ENCODE measurements at regions of chr19 and their contacts with region 1.

Region 1: DNA sequence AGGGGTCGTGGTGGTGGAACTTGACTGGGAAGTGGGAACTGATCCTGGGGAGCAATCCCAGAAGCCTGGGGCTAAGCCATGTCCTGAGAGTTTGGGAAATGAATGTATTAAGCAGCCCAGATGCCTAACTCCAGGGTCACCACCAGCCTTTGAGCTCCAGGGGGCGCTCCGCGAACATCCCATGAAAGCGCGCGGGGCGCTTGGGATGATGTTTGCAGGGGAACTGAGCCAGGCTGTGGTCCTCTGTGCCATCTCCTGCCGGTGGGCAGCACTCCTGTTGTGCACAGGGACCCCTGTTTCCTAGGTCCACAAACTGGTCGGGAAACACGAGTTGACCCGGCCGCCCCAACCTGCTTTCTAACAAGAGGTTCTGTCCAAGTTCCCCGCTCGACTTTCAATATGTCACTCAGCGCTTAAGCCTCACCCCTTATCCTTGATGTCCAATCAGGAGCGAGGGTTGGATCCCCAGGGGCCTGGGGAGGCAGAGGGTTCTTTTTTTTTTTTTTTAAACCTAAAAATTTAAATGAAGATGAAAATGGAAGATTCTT is 14.4 kb downstream of the LEUTX start:
- DNase-seq: peak; percentile 100
- ATAC-seq: peak; percentile 98
- H3K4me3 ChIP-seq: peak overlapping the region; percentile 29 to 42
- H3K27ac ChIP-seq: no peak overlapping the region
- H3K4me1 ChIP-seq: peaks cover 13% of the 10 kb centered on the region
- H3K27me3 ChIP-seq: peaks cover 29% of the 10 kb centered on the region
- CTCF ChIP-seq: no peak

Region 2: GRCh38 chr19:38634757-38635482 is 1158.2 kb before region 1 on chr19:
- CTCF ChIA-PET with region 1: interaction called, 17 read pairs
- POLR2A ChIA-PET with region 1: no interaction called
- in situ Hi-C with region 1: no loop called
- intact Hi-C with region 1: no loop called
- DNase-seq: no peak
- ATAC-seq: peak; percentile 73
- H3K4me3 ChIP-seq: no peak overlapping the region
- H3K27ac ChIP-seq: no peak overlapping the region
- H3K4me1 ChIP-seq: peaks cover 4% of the 10 kb centered on the region; the same call in 1 of the 2 replicates
- H3K27me3 ChIP-seq: no peaks in the 10 kb centered on the region
- CTCF ChIP-seq: no peak

Region 3: DNA sequence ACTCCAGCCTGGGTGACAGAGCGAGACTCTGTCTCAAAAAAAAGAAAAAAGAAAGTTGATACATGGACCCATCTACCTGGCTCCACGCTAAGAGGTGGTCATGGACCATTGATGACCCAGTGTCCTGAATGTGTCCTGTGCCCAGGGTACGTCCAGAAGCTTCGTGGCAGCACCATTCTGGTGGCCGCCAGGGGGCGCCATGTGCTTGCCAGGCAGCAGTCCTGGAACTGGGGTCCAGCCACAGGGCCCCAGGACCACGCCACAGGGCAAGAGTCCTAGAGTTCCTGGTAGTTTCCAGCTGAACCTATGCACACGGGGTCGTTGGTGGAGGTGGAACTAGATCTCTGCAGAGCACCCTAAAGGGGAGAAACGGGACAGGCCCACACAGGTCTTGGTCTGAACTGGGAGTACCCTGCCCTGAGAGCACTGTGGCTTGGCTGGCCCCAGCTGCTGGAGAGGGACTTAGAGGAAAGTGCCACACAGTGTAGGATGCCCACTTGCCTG is 740.8 kb before region 1 on chr19:
- CTCF ChIA-PET with region 1: interaction called, 34 read pairs
- POLR2A ChIA-PET with region 1: interaction called, 4 read pairs
- in situ Hi-C with region 1: no loop called
- intact Hi-C with region 1: loop called (anchors 5 kb)
- DNase-seq: peak; percentile 90
- ATAC-seq: peak; percentile 91
- H3K4me3 ChIP-seq: no peak overlapping the region
- H3K27ac ChIP-seq: peak overlapping the region; percentile 4; the same call in 1 of the 2 replicates
- H3K4me1 ChIP-seq: no peaks in the 10 kb centered on the region
- H3K27me3 ChIP-seq: no peaks in the 10 kb centered on the region
- CTCF ChIP-seq: no peak

Region 4: DNA sequence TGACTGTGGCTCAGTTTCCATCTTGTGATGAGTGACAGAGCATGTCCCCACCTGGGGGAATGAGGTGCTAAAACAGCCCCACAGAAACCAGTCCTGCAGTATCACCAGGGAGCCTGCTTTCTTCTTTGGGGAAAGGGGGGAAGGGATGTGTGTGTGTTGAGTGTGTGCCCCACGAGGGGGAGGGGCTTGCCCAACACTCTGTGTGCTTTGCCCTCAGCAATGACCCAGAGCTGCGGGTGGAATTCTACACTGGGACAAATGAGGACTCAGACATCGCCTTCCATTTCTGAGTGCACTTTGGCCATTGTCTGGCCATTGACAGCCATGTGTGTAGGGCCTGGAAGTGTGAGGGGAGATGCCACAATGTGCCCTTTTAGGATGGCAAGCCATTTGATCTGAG is 98.8 kb before region 1 on chr19:
- CTCF ChIA-PET with region 1: interaction called, 5 read pairs
- POLR2A ChIA-PET with region 1: interaction called, 12 read pairs
- in situ Hi-C with region 1: no loop called
- intact Hi-C with region 1: no loop called
- DNase-seq: no peak
- ATAC-seq: peak; percentile 14; the same call in 1 of the 2 replicates
- H3K4me3 ChIP-seq: no peak overlapping the region
- H3K27ac ChIP-seq: no peak overlapping the region
- H3K4me1 ChIP-seq: no peaks in the 10 kb centered on the region
- H3K27me3 ChIP-seq: peaks cover 96% of the 10 kb centered on the region
- CTCF ChIP-seq: no peak

Region 5: GRCh38 chr19:39818626-39819097 is 25.6 kb after region 1 on chr19:
- CTCF ChIA-PET with region 1: interaction called, 24 read pairs
- POLR2A ChIA-PET with region 1: interaction called, 12 read pairs
- in situ Hi-C with region 1: no loop called
- intact Hi-C with region 1: no loop called
- DNase-seq: no peak
- ATAC-seq: 0 out of 2 replicates have a peak, but pooled peaks have one; percentile 0
- H3K4me3 ChIP-seq: no peak overlapping the region
- H3K27ac ChIP-seq: no peak overlapping the region
- H3K4me1 ChIP-seq: peaks cover 4% of the 10 kb centered on the region
- H3K27me3 ChIP-seq: no peaks in the 10 kb centered on the region
- CTCF ChIP-seq: no peak

Region 6: DNA sequence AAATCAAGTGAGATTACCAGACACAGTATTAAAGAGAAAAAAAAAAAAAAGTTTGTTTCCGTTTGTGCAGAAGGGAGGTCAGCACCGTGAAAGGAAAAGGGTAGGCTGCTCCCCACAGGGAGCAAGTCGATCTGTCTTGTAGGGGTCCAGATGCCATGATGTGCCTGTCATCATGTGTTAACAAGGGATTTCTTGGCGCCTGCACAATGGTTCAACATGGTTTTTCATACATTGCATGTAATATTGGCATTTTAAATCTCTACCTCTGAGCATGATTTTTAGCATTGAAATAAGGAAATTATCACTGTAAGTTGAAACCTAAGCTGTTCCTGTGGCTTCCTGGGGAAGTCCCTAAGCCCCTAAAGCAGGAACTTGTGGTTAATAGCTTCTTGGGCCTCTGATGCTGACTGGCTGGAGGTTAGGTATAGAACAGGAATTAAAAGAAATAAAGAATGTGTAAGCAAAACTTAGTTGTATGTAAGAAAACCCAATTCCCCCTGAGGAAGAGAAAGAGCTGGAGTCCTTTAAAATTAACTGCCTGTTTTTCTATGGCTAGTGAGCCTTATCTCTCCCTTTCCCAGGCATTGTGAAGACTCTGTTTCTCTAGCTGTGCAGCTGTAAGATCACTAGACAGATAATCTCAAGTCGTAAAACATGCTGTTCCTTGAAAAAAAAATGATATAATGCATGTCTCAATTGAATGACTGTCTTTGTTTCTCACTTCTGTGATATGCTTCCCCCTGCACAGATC is 148.7 kb after region 1 on chr19:
- CTCF ChIA-PET with region 1: interaction called, 10 read pairs
- POLR2A ChIA-PET with region 1: no interaction called
- in situ Hi-C with region 1: no loop called
- intact Hi-C with region 1: no loop called
- DNase-seq: no peak
- ATAC-seq: no peak
- H3K4me3 ChIP-seq: no peak overlapping the region
- H3K27ac ChIP-seq: no peak overlapping the region
- H3K4me1 ChIP-seq: peaks cover 8% of the 10 kb centered on the region
- H3K27me3 ChIP-seq: peaks cover 34% of the 10 kb centered on the region
- CTCF ChIP-seq: no peak

Region 7: DNA sequence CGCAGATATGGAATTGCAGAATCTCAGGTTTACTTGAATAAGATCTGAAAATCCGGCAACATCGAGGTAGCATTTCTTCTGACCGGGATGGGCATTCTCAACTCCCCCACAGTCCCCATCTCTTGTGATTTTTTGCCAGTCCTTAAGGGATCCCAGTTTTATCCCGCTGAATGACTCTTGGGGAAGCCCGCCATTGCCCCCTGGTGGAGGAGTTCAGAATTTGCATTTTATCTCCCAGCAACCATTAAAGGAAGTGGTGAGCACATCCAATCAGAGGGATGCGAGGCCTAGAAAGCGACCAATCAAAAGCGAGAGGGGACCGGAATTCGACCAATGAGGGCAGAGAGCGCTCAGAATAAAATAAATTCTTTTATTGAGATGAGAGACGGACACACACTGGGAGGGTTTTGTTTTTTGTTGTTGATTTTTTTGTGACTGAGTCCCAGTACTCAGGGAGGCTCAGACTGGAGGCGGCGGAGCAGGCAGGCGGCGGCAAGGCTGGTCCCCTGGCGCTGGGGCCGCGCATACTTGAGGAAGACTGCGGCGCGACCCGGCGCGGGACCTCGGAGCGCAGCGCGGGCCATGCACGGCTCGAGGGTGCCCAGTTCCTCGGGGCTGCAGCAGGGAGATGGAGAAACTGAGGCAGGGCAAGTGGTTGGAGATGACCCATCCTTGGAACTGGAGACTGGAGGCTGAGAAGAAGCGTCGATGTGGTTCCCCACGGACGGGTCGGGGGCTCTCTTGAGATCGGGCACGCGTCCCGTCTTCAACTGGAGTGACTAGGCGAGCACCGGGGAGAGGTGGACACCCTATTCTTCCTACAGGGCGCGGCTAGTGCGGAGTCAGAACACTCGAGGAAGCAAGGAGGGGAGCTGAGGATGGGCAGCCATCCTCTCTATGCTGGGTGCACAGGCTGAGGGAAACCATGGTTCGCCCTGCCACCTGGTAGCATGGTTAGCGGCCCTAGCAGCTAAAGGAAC is 429.1 kb after region 1 on chr19:
- CTCF ChIA-PET with region 1: interaction called, 10 read pairs
- POLR2A ChIA-PET with region 1: no interaction called
- in situ Hi-C with region 1: no loop called
- intact Hi-C with region 1: no loop called
- DNase-seq: peak; percentile 100
- ATAC-seq: peak; percentile 23
- H3K4me3 ChIP-seq: no peak overlapping the region
- H3K27ac ChIP-seq: no peak overlapping the region
- H3K4me1 ChIP-seq: peaks cover 39% of the 10 kb centered on the region
- H3K27me3 ChIP-seq: peaks cover 26% of the 10 kb centered on the region
- CTCF ChIP-seq: no peak

Measured in Panc1 (cell line).